Heart left ventricle (tissue), 16 donors: ENCODE measurements at regions of chr5 and their contacts with region 1.

Region 1: GRCh38 chr5:123036391-123037103 is at the start of gene PPIC:
- DNase-seq: peak; percentile 91 to 94 (median 93)
- ATAC-seq: peak; percentile 92 to 97 (median 96)
- H3K4me3 ChIP-seq: peak within 1 kb of the TSS; percentile 68 to 96 (median 83)
- H3K27ac ChIP-seq: peak within 1 kb of the TSS; percentile 91 to 98 (median 95)
- H3K4me1 ChIP-seq: peaks cover 0 to 51% (median 28%) of the 10 kb centered on the region in 12 donors
- H3K27me3 ChIP-seq: peaks cover 0 to 17% (median 0%) of the 10 kb centered on the region in 9 donors
- CTCF ChIP-seq: peak in 1 of 12 donors; percentile 10
- POLR2A ChIP-seq: peak in 1 of 2 donors; percentile 91
- total RNA-seq, gene PPIC: 37.9 to 50.8 (median 43.1) TPM

Region 2: DNA sequence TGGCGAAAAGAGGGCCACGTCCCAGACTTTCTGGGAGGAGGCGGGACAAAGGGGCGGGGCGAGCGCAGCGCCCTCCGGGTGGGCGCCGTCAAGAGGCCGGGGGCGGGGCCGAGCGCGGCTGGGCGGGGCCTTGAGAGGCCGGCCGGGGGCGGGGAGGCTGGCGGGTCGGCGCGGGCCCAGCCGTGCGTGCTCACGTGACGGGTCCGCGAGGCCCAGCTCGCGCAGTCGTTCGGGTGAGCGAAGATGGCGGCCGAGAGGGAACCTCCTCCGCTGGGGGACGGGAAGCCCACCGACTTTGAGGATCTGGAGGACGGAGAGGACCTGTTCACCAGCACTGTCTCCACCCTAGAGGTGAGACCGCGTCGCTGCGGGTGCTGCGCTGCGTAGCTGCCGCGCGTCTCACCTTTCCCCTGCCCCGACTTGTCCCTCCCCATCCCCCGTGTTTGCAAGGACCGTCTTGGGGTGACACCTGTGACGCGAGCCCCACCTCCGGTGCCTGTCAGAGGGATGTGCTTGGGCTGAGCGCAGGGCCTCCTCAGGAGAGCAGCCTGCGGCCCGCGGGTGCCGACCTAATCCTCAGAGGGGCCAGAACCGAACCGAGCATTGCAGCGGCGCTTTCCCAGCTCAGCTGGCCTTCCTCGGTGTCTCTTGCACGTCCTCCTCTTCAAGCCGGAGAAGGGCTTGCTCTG is 261.5 kb before region 1 on chr5 and contains the start of gene SNX2:
- intact Hi-C with region 1: loop called in 1 of 10 experiments (anchors 10 kb)
- DNase-seq: peak; percentile 95 to 98 (median 95)
- ATAC-seq: peak; percentile 92 to 100 (median 98)
- H3K4me3 ChIP-seq: peak within 1 kb of the TSS; percentile 71 to 97 (median 87)
- H3K27ac ChIP-seq: peak within 1 kb of the TSS; percentile 33 to 94 (median 83)
- H3K4me1 ChIP-seq: peaks cover 4 to 60% (median 17%) of the 10 kb centered on the region in 12 donors
- H3K27me3 ChIP-seq: no peaks in the 10 kb centered on the region
- CTCF ChIP-seq: peak in 6 of 12 donors; percentile 4 to 34 (median 18)
- POLR2A ChIP-seq: peak in 1 of 2 donors; percentile 83
- total RNA-seq, gene SNX2: 21.5 to 67.3 (median 35.7) TPM

Region 3: GRCh38 chr5:122845229-122846050 is 191.1 kb before region 1 on chr5 and contains the start of gene SNX24:
- intact Hi-C with region 1: loop called in 1 of 10 experiments (anchors 5 kb)
- DNase-seq: peak; percentile 83 to 93 (median 87)
- ATAC-seq: peak; percentile 80 to 95 (median 92)
- H3K4me3 ChIP-seq: peak within 1 kb of the TSS; percentile 74 to 98 (median 92)
- H3K27ac ChIP-seq: peak within 1 kb of the TSS; percentile 58 to 93 (median 88)
- H3K4me1 ChIP-seq: peaks cover 0 to 50% (median 15%) of the 10 kb centered on the region in 12 donors
- H3K27me3 ChIP-seq: no peaks in the 10 kb centered on the region
- CTCF ChIP-seq: peak in 1 of 12 donors; percentile 13
- POLR2A ChIP-seq: peak in 1 of 2 donors; percentile 58
- total RNA-seq, gene SNX24: 10.0 to 21.2 (median 15.1) TPM

Region 4: DNA sequence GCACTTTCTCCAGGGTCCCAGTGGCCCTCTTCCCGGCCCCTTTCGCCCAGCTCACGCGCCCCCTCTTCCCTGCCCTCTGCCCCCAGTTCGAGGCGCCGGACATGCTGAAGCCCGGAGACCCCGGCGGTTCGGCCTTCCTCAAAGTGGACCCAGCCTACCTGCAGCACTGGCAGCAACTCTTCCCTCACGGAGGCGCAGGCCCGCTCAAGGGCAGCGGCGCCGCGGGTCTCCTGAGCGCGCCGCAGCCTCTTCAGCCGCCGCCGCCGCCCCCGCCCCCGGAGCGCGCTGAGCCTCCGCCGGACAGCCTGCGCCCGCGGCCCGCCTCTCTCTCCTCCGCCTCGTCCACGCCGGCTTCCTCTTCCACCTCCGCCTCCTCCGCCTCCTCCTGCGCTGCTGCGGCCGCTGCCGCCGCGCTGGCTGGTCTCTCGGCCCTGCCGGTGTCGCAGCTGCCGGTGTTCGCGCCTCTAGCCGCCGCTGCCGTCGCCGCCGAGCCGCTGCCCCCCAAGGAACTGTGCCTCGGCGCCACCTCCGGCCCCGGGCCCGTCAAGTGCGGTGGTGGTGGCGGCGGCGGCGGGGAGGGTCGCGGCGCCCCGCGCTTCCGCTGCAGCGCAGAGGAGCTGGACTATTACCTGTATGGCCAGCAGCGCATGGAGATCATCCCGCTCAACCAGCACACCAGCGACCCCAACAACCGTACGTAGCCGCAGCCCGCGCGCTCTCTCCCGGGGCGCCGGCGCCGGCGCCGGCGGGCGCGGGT is 53.5 kb after region 1 on chr5:
- intact Hi-C with region 1: loop called in 2 of 10 experiments (anchors 5 kb)
- DNase-seq: peak in 1 of 5 donors; percentile 68
- ATAC-seq: peak; percentile 36 to 69 (median 58)
- H3K4me3 ChIP-seq: peak overlapping the region; percentile 51 to 70 (median 58)
- H3K27ac ChIP-seq: peak overlapping the region in 1 of 12 donors; percentile 76
- H3K4me1 ChIP-seq: peaks cover 0 to 46% (median 24%) of the 10 kb centered on the region in 12 donors
- H3K27me3 ChIP-seq: peaks cover 44 to 98% (median 75%) of the 10 kb centered on the region in 9 donors
- CTCF ChIP-seq: no peak
- POLR2A ChIP-seq: no peak

Region 5: GRCh38 chr5:124029919-124030491 is 993.5 kb after region 1 on chr5:
- intact Hi-C with region 1: no loop called
- DNase-seq: no peak
- ATAC-seq: no peak
- H3K4me3 ChIP-seq: no peak overlapping the region
- H3K27ac ChIP-seq: no peak overlapping the region
- H3K4me1 ChIP-seq: no peaks in the 10 kb centered on the region
- H3K27me3 ChIP-seq: no peaks in the 10 kb centered on the region
- CTCF ChIP-seq: no peak
- POLR2A ChIP-seq: no peak